Activated CD4-positive, alpha-beta T cell treated with anti-CD3 and anti-CD28 coated beads for 36 hours (primary cell): ENCODE measurements at regions of chr16 and their contacts with region 1.

Region 1: DNA sequence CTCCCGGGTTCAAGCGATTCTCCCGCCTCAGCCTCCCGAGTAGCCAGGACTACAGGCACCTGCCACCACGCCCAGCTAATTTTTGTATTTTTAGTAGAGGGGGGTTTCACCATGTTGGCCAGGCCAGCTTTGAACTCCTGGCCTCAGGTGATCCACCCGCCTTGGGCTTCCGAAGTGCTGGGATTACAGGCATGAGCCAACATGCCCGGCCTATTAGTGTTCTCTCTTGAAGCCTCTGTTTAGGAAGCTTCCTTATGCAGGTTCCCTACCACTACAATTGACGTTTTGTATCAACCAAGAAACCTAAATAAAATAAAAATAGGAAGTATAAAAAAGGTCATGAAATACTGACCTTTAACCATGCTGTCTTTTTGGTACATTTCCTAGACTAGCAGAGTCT is 16.0 kb downstream of the CHST5 start:
- DNase-seq: no peak
- ATAC-seq: no peak
- H3K4me3 Mint-ChIP-seq: no peak overlapping the region
- H3K27ac Mint-ChIP-seq: no peak overlapping the region
- H3K4me1 Mint-ChIP-seq: peaks cover 7% of the 10 kb centered on the region
- H3K27me3 Mint-ChIP-seq: no peaks in the 10 kb centered on the region

Region 2: GRCh38 chr16:75432828-75433731 is 86.8 kb before region 1 on chr16 and contains the start of gene CFDP1:
- CTCF ChIA-PET with region 1: interaction called, 3 read pairs
- POLR2A ChIA-PET with region 1: interaction called, 5 read pairs
- intact Hi-C with region 1: loop called (anchors 1 kb)
- DNase-seq: peak; percentile 97
- ATAC-seq: peak; percentile 94
- H3K4me3 Mint-ChIP-seq: peak within 1 kb of the TSS; percentile 92
- H3K27ac Mint-ChIP-seq: peak within 1 kb of the TSS; percentile 95
- H3K4me1 Mint-ChIP-seq: peaks cover 39% of the 10 kb centered on the region
- H3K27me3 Mint-ChIP-seq: no peaks in the 10 kb centered on the region
- total RNA-seq, gene CFDP1: 44.0 to 48.2 TPM

Region 3: DNA sequence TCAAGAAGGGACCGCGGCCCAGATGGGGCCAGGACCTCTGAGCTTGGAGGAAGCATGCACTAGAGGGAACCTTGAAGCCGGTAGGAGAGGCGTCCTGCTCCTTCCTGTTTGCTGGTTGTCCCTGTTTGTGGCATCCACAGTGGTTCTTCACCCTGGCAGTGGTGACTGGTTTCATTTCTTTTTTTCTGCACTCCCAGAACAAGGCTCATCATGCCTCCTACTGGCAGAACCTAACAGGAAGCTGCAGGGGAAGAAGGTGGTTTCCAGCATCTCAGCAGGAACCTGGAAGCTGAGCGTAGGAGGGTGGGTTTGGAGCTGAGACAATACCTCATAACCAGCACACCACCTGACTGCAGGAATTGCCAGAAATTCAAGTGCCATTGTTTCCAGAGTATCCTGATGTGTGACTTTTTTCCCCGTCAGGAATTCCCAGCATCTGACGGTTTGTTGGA is 30.4 kb after region 1 on chr16:
- CTCF ChIA-PET with region 1: interaction called, 15 read pairs
- POLR2A ChIA-PET with region 1: no interaction called
- intact Hi-C with region 1: no loop called
- DNase-seq: peak; percentile 57
- ATAC-seq: peak; percentile 87
- H3K4me3 Mint-ChIP-seq: no peak overlapping the region
- H3K27ac Mint-ChIP-seq: no peak overlapping the region
- H3K4me1 Mint-ChIP-seq: peaks cover 5% of the 10 kb centered on the region
- H3K27me3 Mint-ChIP-seq: peaks cover 3% of the 10 kb centered on the region

Region 4: DNA sequence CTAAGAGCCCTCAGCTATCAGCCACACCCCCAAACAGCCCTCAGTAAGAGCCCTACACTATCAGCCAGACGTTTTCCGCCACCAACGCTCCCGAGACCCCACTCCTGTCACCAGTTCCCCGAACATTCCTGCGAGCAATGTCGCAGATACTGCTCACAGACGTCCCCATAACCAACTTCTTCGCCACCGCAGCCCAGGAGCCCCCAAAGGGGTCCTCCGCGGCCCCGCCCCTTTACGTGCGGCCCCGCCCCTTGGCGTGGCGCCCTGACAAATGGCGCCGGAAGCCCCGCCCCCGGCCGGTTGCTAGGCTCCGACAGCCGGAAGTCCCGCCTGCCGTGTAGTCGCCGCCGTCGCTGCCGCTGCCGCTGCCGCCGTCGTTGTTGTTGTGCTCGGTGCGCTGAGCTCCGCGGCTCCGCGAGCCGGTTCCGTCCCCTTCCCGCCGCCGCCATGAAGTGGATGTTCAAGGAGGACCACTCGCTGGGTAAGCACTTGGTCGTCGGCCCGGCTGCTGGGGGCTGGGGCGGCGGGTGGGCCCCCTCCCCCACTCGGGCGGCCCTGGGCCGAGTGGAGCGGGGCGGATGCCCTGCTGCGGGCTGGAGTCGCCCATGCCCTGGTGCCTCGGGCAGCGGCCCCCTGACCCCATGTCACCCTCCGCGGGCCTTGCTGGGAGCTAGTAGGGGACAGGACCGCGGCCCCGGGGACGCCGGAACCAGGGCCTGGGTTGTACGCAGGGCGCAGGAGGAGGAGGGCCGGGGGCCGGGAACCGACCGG is 46.3 kb after region 1 on chr16 and contains the start of gene GABARAPL2:
- CTCF ChIA-PET with region 1: interaction called, 13 read pairs
- POLR2A ChIA-PET with region 1: interaction called, 4 read pairs
- intact Hi-C with region 1: loop called (anchors 1 to 2 kb)
- DNase-seq: peak; percentile 94
- ATAC-seq: peak; percentile 72
- H3K4me3 Mint-ChIP-seq: peak within 1 kb of the TSS; percentile 82
- H3K27ac Mint-ChIP-seq: peak within 1 kb of the TSS; percentile 86
- H3K4me1 Mint-ChIP-seq: peaks cover 44% of the 10 kb centered on the region
- H3K27me3 Mint-ChIP-seq: peaks cover 10% of the 10 kb centered on the region
- total RNA-seq, gene GABARAPL2: 31.9 to 58.0 TPM

Region 5: DNA sequence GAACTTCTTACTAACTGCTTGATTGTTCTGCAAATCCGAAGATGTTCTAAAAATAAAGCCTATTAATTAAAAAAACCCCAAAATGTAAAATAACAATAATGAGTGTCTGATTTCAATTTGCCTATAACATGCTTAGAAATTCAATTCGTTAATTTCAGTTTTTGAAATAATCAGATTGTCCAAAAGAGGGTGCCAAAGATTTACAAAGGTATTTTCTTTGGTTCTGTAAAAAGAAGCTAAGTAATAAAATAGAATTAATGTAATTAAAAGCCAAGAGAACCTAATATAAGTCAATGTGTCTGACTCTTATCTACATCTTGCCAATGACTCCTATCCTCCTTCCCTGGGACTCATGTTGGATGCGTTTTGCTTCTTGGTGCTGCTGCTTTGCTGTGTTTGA is 281.4 kb after region 1 on chr16:
- CTCF ChIA-PET with region 1: no interaction called
- POLR2A ChIA-PET with region 1: no interaction called
- intact Hi-C with region 1: no loop called
- DNase-seq: no peak
- ATAC-seq: no peak
- H3K4me3 Mint-ChIP-seq: no peak overlapping the region
- H3K27ac Mint-ChIP-seq: no peak overlapping the region
- H3K4me1 Mint-ChIP-seq: no peaks in the 10 kb centered on the region
- H3K27me3 Mint-ChIP-seq: peaks cover 10% of the 10 kb centered on the region